Activated naive CD4-positive, alpha-beta T cell treated with anti-CD3 and anti-CD28 coated beads, Interleukin-2, amount 10 ng/mL, durations not matched to agents 7 days and 5 days (primary cell): ENCODE measurements at regions of chr19 and their contacts with region 1.

Region 1: GRCh38 chr19:39846176-39846677 is at the start of gene FBL:
- DNase-seq: peak; percentile 98
- H3K4me3 Mint-ChIP-seq: peak within 1 kb of the TSS; percentile 92
- H3K27ac Mint-ChIP-seq: peak within 1 kb of the TSS; percentile 96
- H3K4me1 Mint-ChIP-seq: peaks cover 49% of the 10 kb centered on the region
- H3K27me3 Mint-ChIP-seq: no peaks in the 10 kb centered on the region

Region 2: DNA sequence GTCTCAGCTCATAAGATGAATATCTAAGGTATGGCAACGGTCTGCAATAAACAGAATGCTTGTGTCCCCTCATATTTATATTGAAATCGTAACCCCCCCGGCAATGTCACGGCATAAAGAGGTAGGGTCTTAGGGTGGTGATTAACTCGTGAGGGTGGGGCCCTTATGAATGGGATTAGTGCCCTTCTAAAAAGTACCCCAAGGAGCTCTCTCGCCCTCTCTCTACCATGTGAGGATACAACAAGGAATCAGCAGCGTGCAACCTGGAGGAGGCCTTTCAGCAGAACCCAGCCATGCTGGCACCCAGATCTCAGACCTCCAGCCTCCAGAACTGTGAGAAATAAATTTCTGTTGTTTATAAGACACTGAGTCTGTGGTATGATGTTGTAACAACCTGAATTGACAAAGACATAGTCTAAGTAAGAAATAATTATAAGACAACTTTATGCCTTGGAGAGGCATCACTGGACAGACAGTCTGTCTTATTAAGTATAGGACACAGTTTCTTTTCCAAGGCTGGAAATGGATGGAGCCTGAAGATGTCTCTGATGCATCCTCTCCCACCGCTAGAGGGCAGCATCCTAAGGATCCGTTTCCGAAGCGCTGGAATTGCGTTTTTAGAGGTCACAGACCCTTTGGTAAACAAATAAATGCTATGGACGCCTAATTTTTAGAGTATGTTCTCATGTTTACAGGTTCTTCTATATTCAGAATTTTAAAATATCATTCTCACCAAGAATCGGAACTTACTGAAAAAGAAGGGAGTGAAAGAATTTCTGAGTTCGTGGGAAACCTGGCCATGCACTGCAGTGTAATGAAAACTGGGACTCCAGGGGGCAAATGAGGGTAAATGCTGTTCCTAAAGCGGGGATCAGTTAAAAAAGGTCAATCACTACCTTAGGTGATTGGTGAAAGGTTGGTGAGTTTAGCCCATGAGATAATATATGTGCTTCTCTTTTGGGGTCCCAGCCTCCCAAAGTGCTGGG is 80.8 kb before region 1 on chr19:
- CTCF ChIA-PET with region 1: interaction called, 38 read pairs
- DNase-seq: peak; percentile 48
- H3K4me3 Mint-ChIP-seq: no peak overlapping the region
- H3K27ac Mint-ChIP-seq: no peak overlapping the region
- H3K4me1 Mint-ChIP-seq: peaks cover 6% of the 10 kb centered on the region
- H3K27me3 Mint-ChIP-seq: peaks cover 11% of the 10 kb centered on the region

Region 3: GRCh38 chr19:39792999-39793546 is 53.2 kb before region 1 on chr19:
- CTCF ChIA-PET with region 1: interaction called, 69 read pairs
- DNase-seq: peak; percentile 81
- H3K4me3 Mint-ChIP-seq: peak overlapping the region; percentile 72
- H3K27ac Mint-ChIP-seq: no peak overlapping the region
- H3K4me1 Mint-ChIP-seq: peaks cover 7% of the 10 kb centered on the region
- H3K27me3 Mint-ChIP-seq: peaks cover 16% of the 10 kb centered on the region

Region 4: DNA sequence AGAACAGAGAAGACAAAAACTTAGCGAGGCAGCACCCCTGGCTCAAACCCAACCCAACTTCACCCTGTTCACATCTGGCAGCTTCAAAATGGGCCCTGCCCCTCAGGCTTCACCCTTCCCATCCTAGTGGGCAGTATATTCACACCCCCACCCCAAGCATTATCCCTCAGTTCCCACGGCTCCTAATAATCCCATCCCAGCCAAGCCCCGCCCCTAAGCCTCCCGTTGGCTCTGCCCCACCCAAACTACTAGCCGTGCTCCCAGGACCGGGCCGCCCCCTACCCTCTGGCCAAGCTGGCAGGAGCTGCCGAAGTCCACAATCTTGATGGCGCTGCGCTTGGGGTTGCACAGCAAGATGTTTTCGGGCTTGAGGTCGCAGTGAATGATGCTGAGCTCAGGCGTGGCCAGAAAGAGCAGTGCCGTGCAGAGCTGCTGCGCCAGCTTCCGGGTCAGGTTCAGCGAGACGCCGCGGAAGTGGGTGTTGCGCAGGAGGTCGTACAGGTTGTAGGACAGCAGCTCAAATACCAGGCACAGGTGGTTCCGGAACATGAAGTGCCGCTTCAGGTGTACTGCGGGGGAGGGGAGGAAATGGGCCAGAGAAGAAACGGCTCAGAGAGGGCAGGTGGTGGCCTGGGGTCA is 18.1 kb before region 1 on chr19:
- CTCF ChIA-PET with region 1: interaction called, 32 read pairs
- DNase-seq: no peak
- H3K4me3 Mint-ChIP-seq: no peak overlapping the region
- H3K27ac Mint-ChIP-seq: peak overlapping the region; percentile 42
- H3K4me1 Mint-ChIP-seq: peaks cover 29% of the 10 kb centered on the region
- H3K27me3 Mint-ChIP-seq: no peaks in the 10 kb centered on the region

Region 5: DNA sequence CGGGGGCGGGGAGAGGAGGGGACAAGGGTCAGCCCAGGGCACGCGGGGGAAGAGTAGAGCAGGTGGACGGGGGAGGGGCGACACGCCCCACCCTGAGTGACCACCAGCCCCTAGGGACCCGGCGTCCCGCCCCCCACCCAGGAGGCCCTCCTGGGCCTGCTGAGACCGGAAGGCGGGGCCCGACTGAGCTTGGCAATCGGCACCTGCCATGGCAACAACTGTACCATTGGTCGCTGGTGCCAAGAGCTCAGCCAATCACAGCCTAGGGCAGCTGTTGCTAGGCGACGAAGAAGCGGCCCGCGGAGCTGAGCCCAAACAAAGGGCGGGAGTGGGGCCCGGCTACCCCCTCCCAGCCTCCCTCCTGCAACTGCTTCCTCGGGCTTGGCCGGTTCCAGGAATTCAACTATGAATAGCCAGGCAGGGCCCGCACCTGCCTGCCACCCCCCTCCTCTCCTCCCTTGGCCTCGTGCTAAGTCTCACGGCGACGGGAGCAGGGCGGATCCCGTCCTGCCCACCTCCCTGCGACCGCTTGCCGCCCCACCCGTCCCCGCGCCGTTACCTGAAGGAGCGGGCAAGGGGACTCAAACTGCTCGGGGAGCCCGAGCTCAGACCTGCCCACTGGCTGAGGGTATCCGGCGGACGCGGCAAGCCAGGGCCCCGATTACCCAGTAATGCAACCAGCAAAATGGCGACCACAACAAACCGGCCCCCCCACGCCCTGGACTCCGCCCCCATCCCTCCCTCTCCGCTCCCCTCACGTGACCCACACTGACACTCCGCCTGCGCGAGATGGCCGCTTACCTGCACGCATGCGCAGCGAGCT is 12.6 kb before region 1 on chr19 and contains the start of gene DYRK1B:
- CTCF ChIA-PET with region 1: interaction called, 32 read pairs
- DNase-seq: peak; percentile 98
- H3K4me3 Mint-ChIP-seq: peak within 1 kb of the TSS; percentile 74
- H3K27ac Mint-ChIP-seq: peak within 1 kb of the TSS; percentile 80
- H3K4me1 Mint-ChIP-seq: peaks cover 34% of the 10 kb centered on the region
- H3K27me3 Mint-ChIP-seq: no peaks in the 10 kb centered on the region

Region 6: GRCh38 chr19:39870171-39870590 is 24.0 kb after region 1 on chr19:
- CTCF ChIA-PET with region 1: no interaction called
- DNase-seq: no peak
- H3K4me3 Mint-ChIP-seq: no peak overlapping the region
- H3K27ac Mint-ChIP-seq: no peak overlapping the region
- H3K4me1 Mint-ChIP-seq: no peaks in the 10 kb centered on the region
- H3K27me3 Mint-ChIP-seq: no peaks in the 10 kb centered on the region